ENCODE measurements at regions of chr19 and their contacts with region 1.

Region 1: DNA sequence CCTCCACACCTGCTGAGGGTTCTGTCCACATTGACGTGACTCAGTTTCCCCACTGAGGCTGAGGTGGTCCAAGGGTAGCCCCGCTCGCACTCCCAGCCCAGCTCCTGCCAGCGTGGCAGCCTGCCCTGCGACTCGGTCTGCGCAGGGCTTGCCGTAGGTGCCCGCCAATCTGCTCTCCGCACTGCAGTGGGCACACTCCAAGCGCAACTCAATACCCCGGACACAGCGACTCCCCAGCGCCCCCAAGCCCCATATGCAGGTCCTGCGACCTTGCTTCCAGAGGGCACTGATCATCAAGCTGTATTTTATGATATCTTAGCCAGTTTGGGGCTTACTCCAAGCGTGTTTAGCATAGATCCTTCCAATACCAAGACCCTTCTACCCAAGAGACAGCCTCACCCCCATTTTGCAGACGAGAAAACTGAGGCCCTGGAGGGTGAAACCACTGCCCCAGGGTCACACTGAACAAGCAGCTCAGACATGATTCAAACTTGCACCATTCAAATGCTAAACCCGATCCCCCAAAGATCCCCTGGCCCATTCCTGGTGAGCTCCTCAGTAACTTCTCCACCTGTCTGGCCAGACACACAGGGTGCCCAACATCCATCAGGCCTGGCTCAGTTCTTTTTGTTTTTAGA is 13.5 kb downstream of the PTPRS start:
- DNase-seq: peak in 1 of 2 experiments; percentile 65
- H3K4me3 ChIP-seq: no peak overlapping the region
- H3K27ac ChIP-seq: no peak overlapping the region
- H3K4me1 ChIP-seq: peaks cover 0 to 2% (median 0%) of the 10 kb centered on the region in 4 experiments; a peak in 3 of 7 replicates
- H3K27me3 ChIP-seq: no peaks in the 10 kb centered on the region
- CTCF ChIP-seq: peak; percentile 52 to 58 (median 57)
- EP300 ChIP-seq: no peak
- POLR2A ChIP-seq: no peak
- RAD21 ChIP-seq: peak; percentile 40 to 58; a peak in 3 of 4 replicates

Region 2: DNA sequence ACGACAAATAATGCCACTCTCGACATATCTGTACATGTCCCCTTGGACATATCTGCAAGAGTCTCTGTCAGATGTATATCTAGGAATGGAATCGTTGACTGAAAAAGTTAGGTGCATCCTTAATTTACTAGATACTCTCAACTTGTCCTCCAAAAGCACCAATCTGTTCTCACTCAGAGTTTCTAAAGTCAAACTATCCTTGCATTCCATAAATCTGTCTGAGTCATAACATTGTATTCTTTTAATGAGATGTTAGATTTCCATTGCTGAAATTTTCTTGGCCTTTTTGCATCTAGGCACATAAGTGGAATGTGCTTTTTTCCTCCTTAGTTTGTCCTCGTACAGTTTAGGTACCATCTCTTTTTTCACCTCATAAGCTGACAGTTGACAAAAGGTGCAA is 126.3 kb before region 1 on chr19:
- CTCF ChIA-PET with region 1: no interaction called
- POLR2A ChIA-PET with region 1: no interaction called
- DNase-seq: no peak
- H3K4me3 ChIP-seq: no peak overlapping the region
- H3K27ac ChIP-seq: no peak overlapping the region
- H3K4me1 ChIP-seq: no peaks in the 10 kb centered on the region
- H3K27me3 ChIP-seq: no peaks in the 10 kb centered on the region
- CTCF ChIP-seq: no peak
- EP300 ChIP-seq: no peak
- POLR2A ChIP-seq: no peak
- RAD21 ChIP-seq: no peak

Region 3: GRCh38 chr19:5225486-5226345 is 101.4 kb before region 1 on chr19:
- CTCF ChIA-PET with region 1: interaction called, 10 read pairs
- POLR2A ChIA-PET with region 1: no interaction called
- DNase-seq: peak in 1 of 2 experiments; percentile 85
- H3K4me3 ChIP-seq: no peak overlapping the region
- H3K27ac ChIP-seq: no peak overlapping the region
- H3K4me1 ChIP-seq: 0 out of 7 replicates have a peak, but pooled peaks cover 0 to 3% (median 0%) of the 10 kb centered on the region in 4 experiments
- H3K27me3 ChIP-seq: no peaks in the 10 kb centered on the region
- CTCF ChIP-seq: peak; percentile 80 to 95 (median 92)
- EP300 ChIP-seq: no peak
- POLR2A ChIP-seq: no peak
- RAD21 ChIP-seq: peak; percentile 53 to 69

Region 4: DNA sequence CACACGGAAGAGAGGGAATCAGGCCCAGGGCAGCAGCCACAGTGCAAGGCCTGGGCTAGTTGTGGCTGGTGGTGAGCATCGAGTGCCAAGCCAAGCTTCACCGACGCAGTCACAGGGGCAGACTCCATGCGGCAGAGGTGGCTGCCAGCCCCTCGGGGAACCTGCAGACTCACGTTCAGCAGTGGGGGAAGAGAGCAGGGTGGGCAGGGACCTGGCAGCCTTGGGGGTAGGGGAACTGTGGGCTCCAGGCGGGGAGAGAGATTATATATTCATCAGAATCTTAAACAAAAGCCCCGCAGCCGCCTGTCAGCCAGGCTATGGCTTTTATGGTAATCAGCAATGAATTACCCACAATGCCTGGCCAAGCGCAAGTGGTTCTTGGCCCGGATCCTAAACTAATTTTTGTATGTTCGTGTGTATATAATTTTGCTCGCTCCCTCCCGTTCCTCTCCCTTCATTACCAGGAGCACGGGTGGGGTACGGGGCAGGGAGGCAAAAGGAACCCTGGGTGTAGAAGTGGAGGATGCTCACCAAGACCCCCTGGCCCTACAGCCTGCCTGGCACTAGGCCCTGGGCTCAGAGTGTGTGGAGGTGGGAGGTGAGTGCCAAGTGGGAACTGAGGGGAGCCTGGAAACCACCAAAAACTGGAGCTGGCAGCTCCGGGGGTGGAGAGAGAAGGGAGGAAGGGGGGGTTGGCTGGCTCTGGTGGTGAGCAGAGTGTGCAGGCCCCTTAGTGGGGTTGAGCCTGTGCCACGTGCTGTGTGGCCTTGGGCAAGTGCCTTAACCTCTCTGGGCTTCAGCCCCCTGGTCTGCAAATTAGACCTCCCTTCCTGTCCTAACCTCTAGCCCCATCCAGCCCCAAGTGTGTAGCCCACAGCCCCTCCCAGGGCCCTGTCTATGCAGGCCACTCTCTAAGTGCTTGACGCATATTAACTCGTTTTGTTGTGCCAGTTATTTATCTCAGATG is 18.4 kb before region 1 on chr19:
- CTCF ChIA-PET with region 1: interaction called, 10 read pairs
- POLR2A ChIA-PET with region 1: interaction called, 8 read pairs
- DNase-seq: no peak
- H3K4me3 ChIP-seq: no peak overlapping the region
- H3K27ac ChIP-seq: no peak overlapping the region
- H3K4me1 ChIP-seq: peaks cover 2 to 5% (median 3%) of the 10 kb centered on the region in 4 experiments; a peak in 4 of 7 replicates
- H3K27me3 ChIP-seq: no peaks in the 10 kb centered on the region
- CTCF ChIP-seq: no peak
- EP300 ChIP-seq: no peak
- POLR2A ChIP-seq: peak; percentile 58 to 97
- RAD21 ChIP-seq: no peak

Region 5: GRCh38 chr19:5340637-5341447 is 13.7 kb after region 1 on chr19 and contains the start of gene PTPRS:
- CTCF ChIA-PET with region 1: interaction called, 12 read pairs
- POLR2A ChIA-PET with region 1: interaction called, 9 read pairs
- DNase-seq: peak; percentile 33 to 97
- H3K4me3 ChIP-seq: peak within 1 kb of the TSS; percentile 54 to 98 (median 76)
- H3K27ac ChIP-seq: peak within 1 kb of the TSS; percentile 73; the same call in 1 of the 2 replicates
- H3K4me1 ChIP-seq: peaks cover 2 to 21% (median 12%) of the 10 kb centered on the region in 4 experiments
- H3K27me3 ChIP-seq: peaks cover 10 to 18% (median 15%) of the 10 kb centered on the region in 4 experiments
- CTCF ChIP-seq: no peak
- EP300 ChIP-seq: no peak
- POLR2A ChIP-seq: peak; percentile 31 to 62
- RAD21 ChIP-seq: no peak
- total RNA-seq, gene PTPRS: 218 and 223 TPM in 2 replicates